ENCODE measurements at regions of chr2 and their contacts with region 1.

Region 1: GRCh38 chr2:60152226-60152833 is 401.1 kb downstream of the BCL11A start:
- DNase-seq: peak; percentile 21
- H3K4me3 ChIP-seq: no peak overlapping the region
- H3K27ac ChIP-seq: no peak overlapping the region
- H3K4me1 ChIP-seq: no peaks in the 10 kb centered on the region
- H3K27me3 ChIP-seq: peaks cover 4% of the 10 kb centered on the region
- CTCF ChIP-seq: peak; percentile 85 to 92

Region 2: GRCh38 chr2:59824314-59824713 is 328.0 kb before region 1 on chr2:
- CTCF ChIA-PET with region 1: interaction called, 12 read pairs
- dilution Hi-C with region 1: no loop called
- in situ Hi-C with region 1: no loop called
- intact Hi-C with region 1: no loop called
- DNase-seq: no peak
- H3K4me3 ChIP-seq: no peak overlapping the region
- H3K27ac ChIP-seq: no peak overlapping the region
- H3K4me1 ChIP-seq: no peaks in the 10 kb centered on the region
- H3K27me3 ChIP-seq: no peaks in the 10 kb centered on the region
- CTCF ChIP-seq: no peak

Measured in mammary epithelial cell (primary cell).